Calu3 (cell line): ENCODE measurements at regions of chr1 and their contacts with region 1.

Region 1: DNA sequence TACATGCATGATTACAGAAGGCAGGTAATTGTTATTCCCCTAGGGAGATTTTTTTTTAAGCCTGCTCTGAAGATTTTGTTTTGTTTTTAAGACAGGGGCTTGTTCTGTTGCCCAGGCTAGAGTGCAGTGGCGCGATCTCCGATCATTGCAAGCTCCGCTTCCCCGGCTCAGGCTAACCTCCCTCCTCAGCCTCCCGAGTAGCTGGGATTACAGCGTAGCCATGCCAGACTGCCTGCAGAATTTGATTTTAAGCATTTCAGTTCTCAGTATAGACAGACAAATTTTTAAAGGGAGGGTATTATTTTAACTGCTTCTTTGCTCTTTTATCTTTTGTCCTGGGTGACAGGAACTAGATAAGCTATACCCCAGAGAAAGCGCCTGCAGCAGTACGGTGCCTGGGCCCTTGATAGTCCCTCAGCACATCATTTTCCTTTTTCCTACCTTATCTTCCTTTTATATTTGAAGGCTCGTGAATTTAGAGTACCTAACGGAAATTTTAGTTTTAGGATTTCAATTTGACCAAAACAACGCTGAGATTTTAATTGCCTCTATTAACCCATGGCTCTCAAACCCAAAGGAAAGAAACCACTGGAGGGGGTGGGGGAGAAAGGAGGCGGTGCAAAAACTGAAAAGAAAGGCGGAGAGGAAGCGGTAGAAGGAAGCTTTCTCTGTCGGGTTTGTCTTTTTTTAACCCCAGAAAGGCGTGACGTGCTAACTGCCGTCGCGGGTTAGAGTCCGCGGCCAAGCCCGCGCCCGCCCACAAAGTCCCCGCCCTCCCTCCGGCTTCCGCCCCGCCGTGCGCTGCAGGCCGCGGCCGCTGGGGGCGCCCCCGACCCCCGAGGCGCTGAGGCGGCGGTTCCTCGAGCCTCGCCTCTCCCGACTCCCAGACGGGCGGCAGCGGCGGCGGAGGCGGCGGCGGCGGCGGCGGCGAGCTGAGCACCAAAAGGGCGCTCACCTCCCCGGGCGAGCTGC is at the start of gene EEIG2:
- DNase-seq: peak; percentile 87
- H3K4me3 Mint-ChIP-seq: peak within 1 kb of the TSS; percentile 78
- H3K27ac Mint-ChIP-seq: peak within 1 kb of the TSS; percentile 68
- H3K4me1 Mint-ChIP-seq: no peaks in the 10 kb centered on the region
- H3K27me3 Mint-ChIP-seq: no peaks in the 10 kb centered on the region
- CTCF ChIP-seq: peak; percentile 63
- total RNA-seq, gene EEIG2: 7.9 and 13.6 TPM in 2 replicates

Region 2: DNA sequence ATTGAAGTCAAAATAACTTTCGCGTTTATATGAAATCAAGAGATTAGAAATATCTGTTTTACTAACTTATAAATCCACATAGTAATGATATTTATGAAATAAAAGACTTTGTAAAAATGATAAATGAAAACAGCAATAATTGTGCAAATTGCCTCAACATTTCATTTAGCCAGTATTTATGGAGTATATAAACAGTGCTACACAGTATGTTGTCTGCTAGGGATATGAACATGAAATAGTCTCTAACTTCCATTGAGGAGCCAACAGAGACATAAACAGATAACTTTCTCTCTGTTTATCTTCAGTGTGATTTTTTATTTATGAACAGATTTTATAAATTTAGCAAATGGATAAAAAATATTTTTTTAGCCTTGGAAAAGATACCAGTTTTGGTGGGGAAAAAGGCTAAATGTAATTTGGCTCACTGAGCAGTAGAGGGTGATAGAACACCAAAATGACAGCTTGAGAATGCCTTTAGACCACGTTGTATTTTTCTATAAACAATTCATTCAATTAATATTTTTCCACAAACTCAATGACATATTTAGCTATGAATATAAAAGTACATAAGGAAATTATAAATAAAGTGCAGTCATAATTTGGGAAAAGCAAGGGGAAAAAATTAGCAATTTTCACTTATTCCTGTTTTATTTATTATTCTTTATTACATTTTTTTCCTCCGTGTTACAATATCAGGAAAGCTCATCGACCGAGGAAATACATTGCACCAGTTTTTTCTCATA is 47.1 kb before region 1 on chr1:
- CTCF ChIA-PET with region 1: interaction called, 11 read pairs
- intact Hi-C with region 1: loop called (anchors 1 kb)
- DNase-seq: no peak
- H3K4me3 Mint-ChIP-seq: no peak overlapping the region
- H3K27ac Mint-ChIP-seq: no peak overlapping the region
- H3K4me1 Mint-ChIP-seq: no peaks in the 10 kb centered on the region
- H3K27me3 Mint-ChIP-seq: no peaks in the 10 kb centered on the region
- CTCF ChIP-seq: peak; percentile 42

Region 3: DNA sequence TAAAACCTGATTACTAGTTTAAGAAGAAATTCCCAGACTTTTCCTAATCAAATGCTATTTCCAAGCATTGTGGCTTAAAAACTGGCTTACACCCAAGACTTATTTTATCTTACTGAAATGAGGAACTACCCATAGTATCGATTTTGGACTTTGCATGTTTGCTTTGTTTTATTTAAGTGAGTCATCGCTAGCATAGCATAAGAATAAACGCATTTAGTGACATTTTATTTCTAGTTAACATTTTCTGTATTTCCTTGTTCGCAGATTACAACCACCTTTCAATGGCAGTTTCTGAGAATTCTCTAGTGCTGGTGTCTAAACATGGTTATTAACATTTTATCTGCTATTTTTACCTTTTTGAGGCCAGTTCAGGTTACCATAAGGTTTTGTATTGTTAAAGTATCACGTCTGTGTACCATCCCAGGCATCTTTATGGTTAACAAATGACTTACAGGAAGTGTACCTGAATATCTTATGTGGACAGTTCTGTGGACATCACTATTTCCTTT is 24.9 kb after region 1 on chr1:
- CTCF ChIA-PET with region 1: interaction called, 3 read pairs
- intact Hi-C with region 1: loop called (anchors 2 kb)
- DNase-seq: no peak
- H3K4me3 Mint-ChIP-seq: peak overlapping the region; percentile 27
- H3K27ac Mint-ChIP-seq: peak overlapping the region; percentile 94
- H3K4me1 Mint-ChIP-seq: peaks cover 37% of the 10 kb centered on the region
- H3K27me3 Mint-ChIP-seq: no peaks in the 10 kb centered on the region
- CTCF ChIP-seq: no peak

Region 4: DNA sequence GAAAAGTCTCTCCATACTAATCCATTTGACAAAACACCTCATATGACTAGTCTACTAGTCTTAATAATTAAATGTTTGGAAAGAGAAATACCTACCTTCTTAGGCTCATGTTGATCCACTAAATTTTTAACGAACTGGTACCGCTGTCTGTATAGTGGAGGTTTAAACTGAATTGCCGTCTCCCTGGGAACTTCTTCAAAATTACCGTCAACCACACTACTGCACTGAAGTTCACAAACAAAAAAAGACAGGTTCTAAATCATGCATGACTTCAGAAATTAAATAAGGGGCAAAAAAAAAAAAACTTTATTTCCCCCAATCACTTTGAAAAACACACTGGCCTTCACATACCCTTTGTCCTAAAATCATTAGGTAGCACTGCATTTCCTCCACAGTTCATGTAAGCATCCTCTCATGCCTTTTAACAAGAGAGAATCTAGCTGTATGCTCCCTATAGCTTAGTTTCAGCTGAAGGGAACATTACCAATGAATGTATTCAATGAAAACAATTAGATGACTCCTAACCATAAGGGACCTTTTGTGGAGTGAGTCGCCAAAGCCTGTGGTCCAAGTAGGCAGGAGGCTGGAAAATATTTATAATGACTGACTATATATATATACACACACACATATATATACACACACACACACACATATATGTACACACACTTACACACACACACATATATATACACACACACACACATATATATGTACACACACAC is 98.0 kb after region 1 on chr1:
- CTCF ChIA-PET with region 1: no interaction called
- intact Hi-C with region 1: no loop called
- DNase-seq: no peak
- H3K4me3 Mint-ChIP-seq: no peak overlapping the region
- H3K27ac Mint-ChIP-seq: no peak overlapping the region
- H3K4me1 Mint-ChIP-seq: no peaks in the 10 kb centered on the region
- H3K27me3 Mint-ChIP-seq: no peaks in the 10 kb centered on the region
- CTCF ChIP-seq: no peak